A549 (cell line): ENCODE measurements at regions of chr3 and their contacts with region 1.

Region 1: DNA sequence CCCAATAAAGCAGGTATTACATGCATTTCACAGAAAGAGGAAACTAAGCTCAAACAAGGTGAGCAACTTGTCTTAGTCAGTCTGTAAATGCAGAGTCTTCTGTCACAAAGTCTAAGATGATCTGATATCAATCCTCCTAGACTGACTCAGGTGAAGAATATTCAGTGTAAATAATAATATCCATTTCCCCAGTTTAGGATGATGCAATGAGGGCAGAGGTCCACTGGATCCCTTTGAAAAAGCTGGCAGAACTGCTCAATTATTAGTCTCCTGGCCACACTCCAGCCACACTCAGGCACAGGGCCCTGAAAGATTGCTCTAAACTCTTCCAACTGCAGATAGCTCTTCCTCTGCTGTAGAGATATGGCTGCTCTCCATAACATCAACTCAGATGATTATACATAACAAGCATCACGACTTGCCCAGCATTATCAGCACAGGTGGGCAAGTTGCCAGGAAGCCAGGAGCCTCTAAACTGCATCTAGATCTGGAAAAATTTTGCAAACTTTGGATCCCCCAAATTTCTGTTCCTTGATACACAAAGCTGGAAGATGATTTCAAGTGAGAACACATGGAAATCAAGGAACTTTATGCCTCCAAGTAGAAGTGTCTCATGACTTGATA is 129.8 kb upstream of the CPNE4 start:
- DNase-seq: peak; percentile 4 to 80
- ATAC-seq: peak; percentile 83 to 94
- H3K4me3 ChIP-seq: no peak overlapping the region
- H3K27ac ChIP-seq: peak overlapping the region; percentile 68 to 76
- H3K4me1 ChIP-seq: peaks cover 24% of the 10 kb centered on the region
- CTCF ChIP-seq: no peak
- EP300 ChIP-seq: peak; percentile 54 to 80; a peak in 3 of 5 replicates
- POLR2A ChIP-seq: no peak
- RAD21 ChIP-seq: peak; percentile 1 to 45; a peak in 3 of 5 replicates

Region 2: GRCh38 chr3:132135628-132136333 is 28.8 kb before region 1 on chr3:
- CTCF ChIA-PET with region 1: no interaction called
- POLR2A ChIA-PET with region 1: interaction called, 13 read pairs
- DNase-seq: peak; percentile 69 to 90
- ATAC-seq: peak; percentile 99 to 100
- H3K4me3 ChIP-seq: peak overlapping the region; percentile 31
- H3K27ac ChIP-seq: peak overlapping the region; percentile 93 to 94
- H3K4me1 ChIP-seq: peaks cover 38% of the 10 kb centered on the region
- CTCF ChIP-seq: no peak
- EP300 ChIP-seq: peak in 1 of 2 experiments; percentile 66; a peak in 1 of 5 replicates
- POLR2A ChIP-seq: no peak
- RAD21 ChIP-seq: 0 out of 5 replicates have a peak, but pooled peaks of 1 of the 2 experiments have one; percentile 29

Region 3: GRCh38 chr3:132189601-132190000 is 25.0 kb after region 1 on chr3:
- CTCF ChIA-PET with region 1: no interaction called
- POLR2A ChIA-PET with region 1: no interaction called
- DNase-seq: no peak
- ATAC-seq: no peak
- H3K4me3 ChIP-seq: no peak overlapping the region
- H3K27ac ChIP-seq: no peak overlapping the region
- H3K4me1 ChIP-seq: no peaks in the 10 kb centered on the region
- CTCF ChIP-seq: no peak
- EP300 ChIP-seq: no peak
- POLR2A ChIP-seq: no peak
- RAD21 ChIP-seq: no peak